CD4-positive, alpha-beta memory T cell (primary cell): ENCODE measurements at regions of chr6 and their contacts with region 1.

Region 1: GRCh38 chr6:106085984-106086813 is at the start of gene PRDM1:
- DNase-seq: peak; percentile 78 to 93 (median 80)
- H3K4me3 ChIP-seq: peak within 1 kb of the TSS; percentile 58 to 61
- H3K4me3 Mint-ChIP-seq: peak within 1 kb of the TSS; percentile 89 to 97 (median 94)
- H3K27ac ChIP-seq: peak within 1 kb of the TSS; percentile 57
- H3K27ac Mint-ChIP-seq: peak within 1 kb of the TSS; percentile 81 to 94 (median 91)
- H3K4me1 ChIP-seq: peaks cover 84% of the 10 kb centered on the region
- H3K4me1 Mint-ChIP-seq: peaks cover 66 to 95% (median 82%) of the 10 kb centered on the region in 4 donors
- H3K27me3 ChIP-seq: no peaks in the 10 kb centered on the region
- H3K27me3 Mint-ChIP-seq: peaks cover 0 to 2% of the 10 kb centered on the region in 2 donors
- total RNA-seq, gene PRDM1: 33.4 to 34.0 TPM

Region 2: GRCh38 chr6:105431226-105431625 is 655.0 kb before region 1 on chr6:
- CTCF ChIA-PET with region 1: interaction called, 14 read pairs
- POLR2A ChIA-PET with region 1: interaction called, 3 read pairs
- intact Hi-C with region 1: loop called (anchors 5 kb)
- DNase-seq: peak in 4 of 5 donors; percentile 35 to 49 (median 42)
- H3K4me3 ChIP-seq: no peak overlapping the region
- H3K4me3 Mint-ChIP-seq: no peak overlapping the region
- H3K27ac ChIP-seq: no peak overlapping the region
- H3K27ac Mint-ChIP-seq: no peak overlapping the region
- H3K4me1 ChIP-seq: no peaks in the 10 kb centered on the region
- H3K4me1 Mint-ChIP-seq: no peaks in the 10 kb centered on the region
- H3K27me3 ChIP-seq: no peaks in the 10 kb centered on the region
- H3K27me3 Mint-ChIP-seq: peaks cover 0 to 2% of the 10 kb centered on the region in 2 donors

Region 3: GRCh38 chr6:105733565-105734162 is 352.5 kb before region 1 on chr6:
- CTCF ChIA-PET with region 1: interaction called, 12 read pairs
- POLR2A ChIA-PET with region 1: interaction called, 3 read pairs
- intact Hi-C with region 1: loop called (anchors 1 kb)
- DNase-seq: peak in 4 of 5 donors; percentile 39 to 48 (median 42)
- H3K4me3 ChIP-seq: no peak overlapping the region
- H3K4me3 Mint-ChIP-seq: no peak overlapping the region
- H3K27ac ChIP-seq: no peak overlapping the region
- H3K27ac Mint-ChIP-seq: peak overlapping the region in 1 of 7 donors; percentile 21
- H3K4me1 ChIP-seq: no peaks in the 10 kb centered on the region
- H3K4me1 Mint-ChIP-seq: peaks cover 5 to 12% (median 8%) of the 10 kb centered on the region in 4 donors
- H3K27me3 ChIP-seq: no peaks in the 10 kb centered on the region
- H3K27me3 Mint-ChIP-seq: no peaks in the 10 kb centered on the region

Region 4: GRCh38 chr6:106097411-106098231 is 11.4 kb after region 1 on chr6:
- CTCF ChIA-PET with region 1: interaction called, 18 read pairs
- POLR2A ChIA-PET with region 1: interaction called, 151 read pairs
- intact Hi-C with region 1: loop called (anchors 1 kb)
- DNase-seq: peak; percentile 83 to 92 (median 89)
- H3K4me3 ChIP-seq: peak overlapping the region; percentile 89 to 94
- H3K4me3 Mint-ChIP-seq: peak overlapping the region; percentile 95 to 99 (median 97)
- H3K27ac ChIP-seq: peak overlapping the region; percentile 69
- H3K27ac Mint-ChIP-seq: peak overlapping the region; percentile 94 to 98 (median 98)
- H3K4me1 ChIP-seq: peaks cover 71% of the 10 kb centered on the region
- H3K4me1 Mint-ChIP-seq: peaks cover 46 to 86% (median 60%) of the 10 kb centered on the region in 4 donors
- H3K27me3 ChIP-seq: no peaks in the 10 kb centered on the region
- H3K27me3 Mint-ChIP-seq: no peaks in the 10 kb centered on the region

Region 5: GRCh38 chr6:106114492-106115265 is 28.5 kb after region 1 on chr6:
- CTCF ChIA-PET with region 1: interaction called, 20 read pairs
- POLR2A ChIA-PET with region 1: interaction called, 5 read pairs
- intact Hi-C with region 1: no loop called
- DNase-seq: peak in 3 of 5 donors; percentile 33 to 64 (median 39)
- H3K4me3 ChIP-seq: peak overlapping the region in 1 of 2 donors; percentile 30
- H3K4me3 Mint-ChIP-seq: peak overlapping the region; percentile 64 to 86 (median 75)
- H3K27ac ChIP-seq: peak overlapping the region; percentile 41
- H3K27ac Mint-ChIP-seq: peak overlapping the region; percentile 54 to 90 (median 85)
- H3K4me1 ChIP-seq: peaks cover 88% of the 10 kb centered on the region
- H3K4me1 Mint-ChIP-seq: peaks cover 65 to 98% (median 81%) of the 10 kb centered on the region in 4 donors
- H3K27me3 ChIP-seq: no peaks in the 10 kb centered on the region
- H3K27me3 Mint-ChIP-seq: peaks cover 0 to 2% of the 10 kb centered on the region in 2 donors

Region 6: GRCh38 chr6:106300944-106301343 is 214.7 kb after region 1 on chr6:
- CTCF ChIA-PET with region 1: interaction called, 4 read pairs
- POLR2A ChIA-PET with region 1: no interaction called
- intact Hi-C with region 1: loop called (anchors 2 kb)
- DNase-seq: peak in 4 of 5 donors; percentile 10 to 36 (median 25)
- H3K4me3 ChIP-seq: no peak overlapping the region
- H3K4me3 Mint-ChIP-seq: no peak overlapping the region
- H3K27ac ChIP-seq: no peak overlapping the region
- H3K27ac Mint-ChIP-seq: no peak overlapping the region
- H3K4me1 ChIP-seq: peaks cover 3% of the 10 kb centered on the region
- H3K4me1 Mint-ChIP-seq: peaks cover 6 to 12% (median 10%) of the 10 kb centered on the region in 4 donors
- H3K27me3 ChIP-seq: no peaks in the 10 kb centered on the region
- H3K27me3 Mint-ChIP-seq: no peaks in the 10 kb centered on the region